ENCODE measurements at regions of chr7 and their contacts with region 1.

Region 1: DNA sequence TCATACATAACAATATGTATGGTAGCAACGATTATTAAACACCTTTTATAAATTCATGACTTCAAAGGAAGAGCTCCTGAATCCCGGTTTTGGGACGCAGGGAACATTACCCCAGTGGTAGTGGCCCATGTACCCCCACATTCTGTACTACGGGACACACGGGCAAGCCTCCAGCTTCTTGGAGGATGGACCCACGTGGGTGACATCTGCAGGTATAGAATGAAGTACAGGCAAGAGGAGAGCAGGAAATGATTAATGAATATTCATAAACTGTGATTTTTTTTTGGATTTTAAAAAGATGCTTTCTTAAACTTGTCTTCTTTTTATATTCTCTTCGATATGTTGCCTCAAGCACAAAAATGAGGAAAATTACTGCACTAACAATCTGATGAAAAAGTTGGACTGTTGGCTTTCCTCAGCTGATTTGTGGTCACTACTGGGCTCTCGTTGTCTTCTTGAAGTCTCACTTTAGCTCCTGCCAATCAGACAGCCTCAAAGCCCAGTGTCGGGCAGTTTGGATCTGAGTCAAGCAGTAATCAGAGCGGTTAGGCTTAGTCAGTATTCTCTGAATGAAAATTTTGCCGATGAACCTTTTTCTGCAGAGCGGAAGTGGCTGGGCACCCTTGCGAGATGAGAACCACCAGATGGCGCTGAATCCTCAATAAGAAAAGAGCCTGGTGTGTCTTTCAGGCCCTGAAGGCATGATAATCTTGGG is 157.7 kb upstream of the CDCA7L start:
- DNase-seq: peak; percentile 65 to 73
- ATAC-seq: peak; percentile 86 to 98
- H3K4me3 ChIP-seq: no peak overlapping the region
- H3K27ac ChIP-seq: no peak overlapping the region
- H3K4me1 ChIP-seq: no peaks in the 10 kb centered on the region
- CTCF ChIP-seq: peak; percentile 64
- EP300 ChIP-seq: no peak
- POLR2A ChIP-seq: no peak
- RAD21 ChIP-seq: peak; percentile 59 to 64

Region 2: DNA sequence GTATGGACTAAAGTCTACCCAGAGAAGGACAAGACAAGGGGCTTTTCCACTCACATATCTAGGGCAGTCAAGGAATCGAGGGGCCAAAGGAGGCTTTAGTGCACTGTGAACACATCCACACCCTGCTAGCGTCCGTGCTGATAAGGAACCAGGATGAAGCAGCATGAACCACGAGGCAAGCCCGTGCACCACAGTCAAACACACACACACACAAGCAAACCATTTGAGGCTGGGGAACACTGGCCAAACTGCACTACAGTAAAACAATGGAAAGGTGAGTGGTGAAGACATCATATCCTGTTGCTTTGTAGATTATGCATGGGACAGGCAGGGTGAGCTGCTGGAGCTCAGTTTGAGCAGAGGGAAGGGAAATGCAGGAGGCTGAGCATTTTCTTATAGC is 19.7 kb after region 1 on chr7:
- CTCF ChIA-PET with region 1: no interaction called
- POLR2A ChIA-PET with region 1: no interaction called
- DNase-seq: no peak
- ATAC-seq: no peak
- H3K4me3 ChIP-seq: no peak overlapping the region
- H3K27ac ChIP-seq: no peak overlapping the region
- H3K4me1 ChIP-seq: no peaks in the 10 kb centered on the region
- CTCF ChIP-seq: no peak
- EP300 ChIP-seq: no peak
- POLR2A ChIP-seq: no peak
- RAD21 ChIP-seq: no peak

Region 3: DNA sequence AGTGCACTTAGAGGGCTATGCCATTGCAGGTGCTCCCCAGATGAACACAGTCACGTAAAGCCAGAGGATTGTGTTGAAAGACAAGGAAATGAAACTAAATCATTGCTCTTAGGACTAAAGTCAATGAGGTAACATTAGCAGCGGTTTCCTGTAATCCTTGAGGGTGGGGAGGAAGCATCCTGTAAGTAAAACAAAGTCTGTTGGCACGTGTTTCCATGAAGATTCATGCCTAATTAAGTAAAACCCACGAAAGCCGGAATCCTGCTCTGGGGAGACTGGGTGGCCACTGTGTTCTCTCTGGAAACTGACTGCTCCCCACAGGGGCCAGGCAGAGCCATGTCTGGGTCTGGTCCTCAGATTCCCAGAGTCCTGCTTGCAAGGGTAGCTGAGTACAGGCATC is 378.3 kb after region 1 on chr7:
- CTCF ChIA-PET with region 1: interaction called, 82 read pairs
- POLR2A ChIA-PET with region 1: no interaction called
- DNase-seq: no peak
- ATAC-seq: no peak
- H3K4me3 ChIP-seq: no peak overlapping the region
- H3K27ac ChIP-seq: no peak overlapping the region
- H3K4me1 ChIP-seq: no peaks in the 10 kb centered on the region
- CTCF ChIP-seq: no peak
- EP300 ChIP-seq: no peak
- POLR2A ChIP-seq: no peak
- RAD21 ChIP-seq: no peak

Region 4: DNA sequence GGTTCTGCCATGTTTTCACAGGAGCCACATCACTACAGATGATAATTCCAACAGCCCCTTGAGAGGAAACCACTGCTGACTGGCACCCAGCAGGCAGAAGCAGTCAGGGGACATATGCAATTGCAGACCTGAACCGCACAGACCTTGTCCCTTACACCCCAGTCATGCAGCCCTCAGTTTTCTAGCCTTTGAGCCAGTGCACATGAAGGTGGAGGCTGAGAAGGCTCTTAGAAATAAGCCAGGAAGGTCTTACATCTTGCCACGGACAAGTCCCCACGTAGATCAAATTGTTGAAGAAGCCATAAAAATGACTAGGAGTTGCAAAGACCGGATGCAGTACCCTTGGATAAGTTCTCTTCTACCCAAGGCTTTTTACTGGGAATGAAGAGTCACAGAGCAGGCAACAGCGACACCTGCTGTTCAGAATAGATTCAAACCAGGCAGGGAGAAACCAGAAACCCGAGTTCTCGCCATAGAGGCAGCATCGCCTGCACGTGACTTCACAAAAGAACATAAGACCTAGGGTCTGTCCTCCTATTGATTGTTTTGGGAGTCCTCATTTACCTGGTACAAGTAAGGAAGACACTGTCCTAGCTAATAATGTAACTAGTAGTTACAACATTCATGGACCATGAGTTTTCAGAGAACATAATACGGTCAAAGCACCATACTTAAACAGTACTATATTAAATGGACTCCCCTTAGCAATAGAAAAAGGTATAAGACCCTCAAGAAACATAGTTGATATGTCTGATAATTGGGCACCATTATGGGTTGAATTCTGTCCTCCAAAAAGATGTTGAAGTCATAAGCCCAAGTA is 385.4 kb after region 1 on chr7:
- CTCF ChIA-PET with region 1: interaction called, 82 read pairs
- POLR2A ChIA-PET with region 1: no interaction called
- DNase-seq: peak; percentile 57 to 59
- ATAC-seq: peak; percentile 91 to 94
- H3K4me3 ChIP-seq: no peak overlapping the region
- H3K27ac ChIP-seq: no peak overlapping the region
- H3K4me1 ChIP-seq: no peaks in the 10 kb centered on the region
- CTCF ChIP-seq: peak; percentile 91
- EP300 ChIP-seq: no peak
- POLR2A ChIP-seq: no peak
- RAD21 ChIP-seq: peak; percentile 88 to 91